ENCODE measurements at regions of chr1 and their contacts with region 1.

Region 1: GRCh38 chr1:2194898-2195673 is 514 bp upstream of the FAAP20 start:
- DNase-seq: peak; percentile 92
- H3K4me3 Mint-ChIP-seq: peak overlapping the region; percentile 78
- H3K27ac Mint-ChIP-seq: peak overlapping the region; percentile 93
- H3K4me1 Mint-ChIP-seq: peaks cover 35% of the 10 kb centered on the region
- H3K27me3 Mint-ChIP-seq: no peaks in the 10 kb centered on the region

Region 2: DNA sequence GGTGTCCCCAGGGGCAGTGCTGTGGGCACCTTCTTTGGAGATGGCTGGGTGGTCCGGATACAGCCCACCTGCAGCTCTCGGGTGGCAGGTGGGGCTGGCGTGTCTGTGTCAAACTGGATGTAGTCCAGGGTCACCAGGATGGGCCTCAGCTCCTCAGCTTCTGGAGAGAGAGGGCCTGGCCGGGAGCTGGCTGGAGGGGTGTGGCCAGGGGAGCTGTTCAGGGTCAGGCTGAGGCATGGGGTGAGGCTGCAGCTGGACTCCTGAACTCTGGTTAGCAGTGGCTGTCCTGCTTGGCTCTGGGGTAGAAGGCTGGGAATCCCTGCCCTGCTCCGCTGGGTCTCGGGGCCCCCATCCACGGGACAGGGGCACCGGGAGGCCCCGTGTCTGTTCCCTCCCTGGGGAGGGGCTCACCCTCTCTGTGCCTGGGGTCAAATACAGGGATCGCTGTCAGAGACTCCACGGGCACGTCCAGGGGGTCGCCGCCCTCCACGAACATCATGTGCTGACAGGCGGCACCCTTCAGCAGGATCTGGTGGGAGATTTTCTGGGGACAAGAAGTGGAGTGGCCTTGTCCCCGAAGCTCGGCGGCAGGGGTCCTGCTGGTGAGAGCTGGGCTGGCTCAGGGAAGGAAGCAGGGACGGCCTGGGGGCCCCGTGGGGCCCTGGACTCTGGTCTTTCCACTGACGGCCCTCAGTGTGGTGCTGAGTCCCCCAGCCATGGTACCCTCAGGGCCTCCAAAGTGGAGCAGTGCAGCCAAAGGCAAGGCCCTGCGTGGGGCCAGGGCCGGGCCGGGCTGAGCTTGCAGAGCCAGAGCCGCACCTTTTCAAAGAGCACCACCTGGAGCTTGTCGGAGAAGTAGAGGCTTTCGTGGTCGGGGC is 271.9 kb before region 1 on chr1:
- CTCF ChIA-PET with region 1: no interaction called
- intact Hi-C with region 1: no loop called
- DNase-seq: no peak
- H3K4me3 Mint-ChIP-seq: no peak overlapping the region
- H3K27ac Mint-ChIP-seq: no peak overlapping the region
- H3K4me1 Mint-ChIP-seq: peaks cover 3% of the 10 kb centered on the region
- H3K27me3 Mint-ChIP-seq: no peaks in the 10 kb centered on the region

Region 3: GRCh38 chr1:2183937-2184334 is 11.2 kb before region 1 on chr1:
- CTCF ChIA-PET with region 1: no interaction called
- intact Hi-C with region 1: no loop called
- DNase-seq: no peak
- H3K4me3 Mint-ChIP-seq: no peak overlapping the region
- H3K27ac Mint-ChIP-seq: no peak overlapping the region
- H3K4me1 Mint-ChIP-seq: no peaks in the 10 kb centered on the region
- H3K27me3 Mint-ChIP-seq: no peaks in the 10 kb centered on the region

Region 4: DNA sequence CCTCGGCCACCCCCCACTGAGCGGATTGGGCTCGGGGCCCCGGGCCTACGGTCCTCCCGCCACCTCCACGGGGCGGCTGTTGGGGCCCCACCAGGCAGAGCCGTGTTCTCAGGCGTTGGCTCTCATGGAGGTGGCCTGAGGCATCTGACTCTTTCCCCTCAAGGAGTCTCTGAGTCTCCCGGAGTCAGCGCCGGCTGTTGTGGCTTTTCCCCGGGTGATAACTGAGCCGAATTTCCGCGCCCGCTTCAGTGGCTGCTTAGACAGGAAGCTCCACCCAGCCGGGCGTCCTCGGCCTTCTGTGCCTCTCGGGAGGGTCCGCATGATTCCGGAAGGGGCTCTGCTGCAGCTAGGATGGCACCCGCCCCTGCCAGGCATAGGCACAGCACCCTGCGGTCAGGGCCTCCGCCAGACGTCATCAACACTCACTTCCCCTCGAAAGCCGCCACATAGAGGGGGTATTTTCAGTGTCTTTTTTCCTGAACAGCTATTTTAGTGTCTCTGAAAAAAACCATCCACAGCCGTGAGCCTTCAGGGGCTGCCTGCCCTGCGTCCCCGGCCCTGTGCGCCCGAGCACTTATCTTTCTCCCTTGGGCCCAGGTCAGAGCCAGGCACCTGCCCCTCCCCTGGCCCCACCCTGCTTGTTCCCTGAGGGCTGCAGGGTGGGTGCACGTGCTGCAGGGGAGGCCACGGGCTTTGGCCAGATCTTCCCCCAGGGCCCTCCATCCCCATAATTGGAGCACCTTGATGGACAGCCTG is 105.9 kb after region 1 on chr1:
- CTCF ChIA-PET with region 1: interaction called, 7 read pairs
- intact Hi-C with region 1: loop called (anchors 1 kb)
- DNase-seq: peak; percentile 96
- H3K4me3 Mint-ChIP-seq: peak overlapping the region; percentile 77
- H3K27ac Mint-ChIP-seq: peak overlapping the region; percentile 98
- H3K4me1 Mint-ChIP-seq: peaks cover 60% of the 10 kb centered on the region
- H3K27me3 Mint-ChIP-seq: no peaks in the 10 kb centered on the region

Region 5: GRCh38 chr1:2381741-2382620 is 186.9 kb after region 1 on chr1:
- CTCF ChIA-PET with region 1: interaction called, 129 read pairs
- intact Hi-C with region 1: loop called (anchors 1 kb)
- DNase-seq: peak; percentile 86
- H3K4me3 Mint-ChIP-seq: no peak overlapping the region
- H3K27ac Mint-ChIP-seq: no peak overlapping the region
- H3K4me1 Mint-ChIP-seq: no peaks in the 10 kb centered on the region
- H3K27me3 Mint-ChIP-seq: no peaks in the 10 kb centered on the region

Region 6: DNA sequence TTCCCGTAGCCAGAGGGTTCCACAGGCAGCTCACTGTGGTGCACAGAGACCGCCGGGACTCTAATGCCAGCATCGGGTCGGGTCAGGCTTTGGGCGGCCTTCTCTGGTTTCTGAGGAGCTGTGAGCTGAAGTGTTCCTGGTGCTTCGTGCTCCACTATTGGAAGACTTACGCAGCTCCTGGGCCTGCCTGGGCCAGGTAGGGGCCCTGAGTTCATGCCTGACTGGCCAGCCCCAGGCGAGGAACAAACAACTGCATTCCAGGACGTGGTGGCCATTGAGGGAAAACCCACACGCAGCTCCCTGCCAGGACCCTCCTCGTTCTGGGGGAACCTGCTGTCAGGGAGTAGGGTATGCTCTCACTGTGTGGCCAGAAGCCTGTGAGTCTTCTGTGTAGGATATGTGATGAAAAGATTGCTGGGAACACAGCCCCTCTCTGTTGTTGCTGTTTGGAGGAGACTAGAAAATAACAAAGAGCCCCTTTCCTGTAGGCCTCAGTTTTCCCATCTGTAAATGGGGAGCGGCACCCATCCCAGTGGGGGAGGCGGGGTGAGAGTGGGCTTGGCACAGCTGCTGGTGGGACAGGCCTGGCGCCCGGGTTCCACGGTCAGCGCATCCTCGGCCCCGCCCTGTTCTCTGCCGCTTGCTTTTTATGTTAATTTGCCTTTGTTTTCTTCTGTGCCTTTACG is 204.9 kb after region 1 on chr1:
- CTCF ChIA-PET with region 1: no interaction called
- intact Hi-C with region 1: no loop called
- DNase-seq: no peak
- H3K4me3 Mint-ChIP-seq: no peak overlapping the region
- H3K27ac Mint-ChIP-seq: peak overlapping the region; percentile 24
- H3K4me1 Mint-ChIP-seq: peaks cover 9% of the 10 kb centered on the region
- H3K27me3 Mint-ChIP-seq: no peaks in the 10 kb centered on the region

Region 7: GRCh38 chr1:2412519-2413233 is 217.6 kb after region 1 on chr1 and contains the start of gene PEX10:
- CTCF ChIA-PET with region 1: interaction called, 4 read pairs
- intact Hi-C with region 1: loop called (anchors 1 kb)
- DNase-seq: peak; percentile 99
- H3K4me3 Mint-ChIP-seq: peak within 1 kb of the TSS; percentile 84
- H3K27ac Mint-ChIP-seq: peak within 1 kb of the TSS; percentile 77
- H3K4me1 Mint-ChIP-seq: peaks cover 37% of the 10 kb centered on the region
- H3K27me3 Mint-ChIP-seq: no peaks in the 10 kb centered on the region
- total RNA-seq, gene PEX10: 8.6 to 9.1 TPM

Region 8: DNA sequence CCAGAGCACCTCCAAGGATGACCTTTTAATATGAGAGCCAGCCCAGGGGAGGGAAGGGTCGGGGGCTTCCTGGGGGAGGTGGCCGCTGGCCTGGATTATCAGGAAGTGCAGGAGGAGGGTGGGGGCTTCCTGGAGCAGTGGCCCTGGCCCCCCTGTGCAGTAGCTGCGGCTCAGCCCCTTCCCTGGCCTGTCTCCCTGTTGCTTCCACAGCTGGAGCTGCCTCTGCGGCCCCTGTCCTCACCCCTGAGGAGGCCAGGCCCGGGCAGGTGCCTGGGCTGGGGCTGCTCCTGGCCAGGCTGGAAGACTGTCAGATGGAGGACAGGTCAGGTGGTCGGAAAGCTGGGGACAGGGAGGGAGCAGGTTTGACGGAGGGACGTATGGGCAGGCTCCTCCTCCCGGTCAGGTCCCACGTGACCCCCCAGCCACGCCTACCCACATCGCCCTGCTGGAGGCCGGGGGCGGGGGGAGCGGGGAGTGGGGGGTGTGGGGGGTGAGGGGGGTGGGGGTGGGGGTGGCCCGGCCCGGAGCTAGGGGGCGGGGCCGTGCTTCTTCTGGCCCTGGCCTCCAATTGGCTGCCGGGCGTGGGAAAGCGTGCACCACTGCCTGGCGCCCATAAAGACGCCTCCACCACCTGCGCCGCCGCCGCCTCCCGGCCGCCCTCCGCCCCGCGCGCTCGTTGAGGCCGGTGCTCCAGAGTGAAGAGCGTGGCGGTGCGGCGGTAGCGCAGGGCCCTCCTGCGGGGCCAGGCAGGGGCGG is 350.9 kb after region 1 on chr1:
- CTCF ChIA-PET with region 1: interaction called, 3 read pairs
- intact Hi-C with region 1: loop called (anchors 1 kb)
- DNase-seq: peak; percentile 87
- H3K4me3 Mint-ChIP-seq: peak overlapping the region; percentile 81
- H3K27ac Mint-ChIP-seq: no peak overlapping the region
- H3K4me1 Mint-ChIP-seq: peaks cover 19% of the 10 kb centered on the region
- H3K27me3 Mint-ChIP-seq: no peaks in the 10 kb centered on the region

Region 9: DNA sequence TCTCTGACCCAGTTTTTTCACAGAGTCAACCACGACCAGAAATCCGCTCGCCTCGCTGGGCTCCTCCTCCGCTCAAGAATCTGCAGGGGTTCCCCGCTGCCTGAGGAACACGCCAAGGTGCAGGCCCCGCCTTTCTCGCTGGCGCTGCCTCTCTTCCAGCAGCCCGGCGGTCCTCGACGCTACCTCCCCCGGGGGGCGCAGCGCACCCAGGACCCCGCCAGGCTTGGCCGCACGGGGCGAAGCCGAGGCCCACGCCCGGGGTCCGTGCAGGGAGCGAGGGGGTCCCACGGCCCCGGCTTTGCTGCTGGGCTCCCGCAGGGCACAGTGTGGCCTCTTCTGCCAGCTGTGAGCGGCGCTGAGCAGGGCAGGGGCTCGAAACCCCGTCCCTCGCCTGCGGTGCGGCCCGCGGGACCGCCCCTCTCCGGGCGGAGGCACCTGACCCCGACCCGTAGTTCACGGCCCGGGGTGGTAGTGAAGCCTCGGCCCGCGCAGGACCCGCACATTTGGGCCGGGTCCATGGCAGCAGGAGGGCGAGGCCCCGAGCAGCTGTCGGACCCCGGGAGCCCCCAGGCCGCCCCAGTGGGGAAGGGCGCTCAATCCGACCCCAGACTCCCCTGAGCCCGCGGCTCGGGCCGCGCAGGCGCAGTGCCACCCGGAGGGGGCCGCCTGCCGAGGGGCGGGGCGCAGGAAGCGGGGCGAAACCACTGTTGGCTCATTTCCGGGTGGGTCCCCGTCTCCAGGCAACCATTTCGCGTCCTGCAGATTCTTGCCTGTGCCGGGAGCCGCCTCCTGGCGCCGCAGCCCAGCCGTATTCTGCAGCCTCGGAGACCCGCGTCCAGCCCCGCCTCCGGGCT is 447.7 kb after region 1 on chr1:
- CTCF ChIA-PET with region 1: no interaction called
- intact Hi-C with region 1: loop called (anchors 2 kb)
- DNase-seq: peak; percentile 97
- H3K4me3 Mint-ChIP-seq: peak overlapping the region; percentile 90
- H3K27ac Mint-ChIP-seq: peak overlapping the region; percentile 88
- H3K4me1 Mint-ChIP-seq: peaks cover 6% of the 10 kb centered on the region
- H3K27me3 Mint-ChIP-seq: no peaks in the 10 kb centered on the region